Heart left ventricle (tissue), 16 donors: ENCODE measurements at regions of chr1 and their contacts with region 1.

Region 1: DNA sequence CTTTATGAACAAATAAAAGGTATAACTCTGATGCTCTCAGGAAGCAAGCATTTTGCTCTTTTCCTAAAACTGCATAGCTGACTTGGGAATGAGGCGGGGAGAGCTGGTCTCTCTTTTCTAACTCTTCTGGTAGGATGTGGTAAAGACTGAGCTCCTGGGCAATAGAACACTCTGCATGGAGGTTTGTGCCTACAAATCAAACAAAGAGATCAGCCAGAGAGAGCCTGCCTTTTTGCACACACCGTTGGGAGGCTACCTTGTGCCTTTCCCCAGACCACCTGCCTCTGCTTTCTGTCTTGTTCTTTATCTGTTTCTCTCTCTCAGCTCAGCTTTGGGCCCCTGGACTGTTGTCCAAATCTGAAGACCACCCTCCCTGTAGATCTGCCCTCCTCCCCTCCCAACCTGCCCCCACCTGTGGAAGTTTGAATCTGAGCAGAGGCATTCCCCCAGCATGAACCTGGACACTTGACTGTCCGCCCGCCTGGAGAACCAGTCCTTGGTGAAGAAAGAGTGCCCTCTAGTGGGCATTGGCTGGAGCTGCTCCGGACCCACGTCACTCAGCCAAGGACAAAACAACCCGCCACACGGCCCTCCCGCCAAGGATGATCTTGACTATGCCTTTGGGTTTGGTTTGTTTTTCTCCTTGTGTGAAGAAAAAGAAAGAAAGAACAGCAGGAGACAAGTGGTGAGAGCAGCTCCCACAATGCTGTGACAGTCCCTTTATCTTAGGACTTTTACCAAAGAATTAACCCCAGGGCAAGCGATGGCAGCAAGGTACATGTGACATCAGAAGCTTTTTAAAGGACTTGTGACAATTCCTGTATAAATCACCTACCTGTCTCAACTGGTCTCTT is 228.2 kb downstream of the PBX1 start:
- DNase-seq: peak; percentile 79 to 88 (median 82)
- ATAC-seq: peak; percentile 76 to 89 (median 88)
- H3K4me3 ChIP-seq: no peak overlapping the region
- H3K27ac ChIP-seq: peak overlapping the region in 7 of 12 donors; percentile 22 to 80 (median 63)
- H3K4me1 ChIP-seq: peaks cover 0 to 75% (median 33%) of the 10 kb centered on the region in 12 donors
- H3K27me3 ChIP-seq: no peaks in the 10 kb centered on the region
- CTCF ChIP-seq: peak; percentile 85 to 93 (median 90)
- POLR2A ChIP-seq: no peak

Region 2: DNA sequence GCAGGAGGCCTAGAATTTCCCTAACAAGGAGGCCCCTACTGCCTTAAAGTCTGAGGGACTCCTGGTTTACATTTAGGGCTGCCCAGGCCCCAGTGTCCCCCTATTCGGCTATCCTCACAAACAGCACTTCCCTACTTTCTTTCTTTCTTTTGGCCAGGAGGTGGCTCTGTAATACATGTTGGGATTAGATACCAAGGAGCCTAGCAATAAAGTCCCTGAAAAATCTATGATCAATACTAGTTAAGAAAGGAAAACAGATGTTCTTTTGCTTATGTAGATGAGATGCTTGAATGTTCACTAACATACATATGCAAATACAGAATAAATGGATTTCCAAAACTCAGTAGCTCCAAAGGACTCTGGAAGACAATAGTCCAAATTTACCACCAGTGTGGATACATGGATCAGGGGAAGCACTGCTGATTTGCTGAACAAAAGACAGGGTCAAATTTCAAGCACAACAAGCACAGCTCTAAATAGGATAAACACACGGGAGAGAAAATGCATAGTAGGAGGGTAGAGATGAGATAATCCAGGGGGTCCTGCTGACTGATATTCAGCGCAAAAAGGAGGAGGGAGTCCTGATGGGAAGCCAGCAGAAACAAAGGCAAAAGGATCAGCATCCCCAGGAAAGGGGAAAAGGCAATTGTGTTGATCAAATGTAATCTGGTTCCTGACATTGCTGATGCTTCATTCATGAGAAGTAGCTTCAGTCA is 1225.5 kb before region 1 on chr1:
- intact Hi-C with region 1: loop called in 1 of 10 experiments (anchors 10 kb)
- DNase-seq: no peak
- ATAC-seq: peak in 2 of 4 donors; percentile 47 to 63
- H3K4me3 ChIP-seq: no peak overlapping the region
- H3K27ac ChIP-seq: no peak overlapping the region
- H3K4me1 ChIP-seq: no peaks in the 10 kb centered on the region
- H3K27me3 ChIP-seq: no peaks in the 10 kb centered on the region
- CTCF ChIP-seq: peak in 11 of 12 donors; percentile 23 to 64 (median 46)
- POLR2A ChIP-seq: no peak

Region 3: DNA sequence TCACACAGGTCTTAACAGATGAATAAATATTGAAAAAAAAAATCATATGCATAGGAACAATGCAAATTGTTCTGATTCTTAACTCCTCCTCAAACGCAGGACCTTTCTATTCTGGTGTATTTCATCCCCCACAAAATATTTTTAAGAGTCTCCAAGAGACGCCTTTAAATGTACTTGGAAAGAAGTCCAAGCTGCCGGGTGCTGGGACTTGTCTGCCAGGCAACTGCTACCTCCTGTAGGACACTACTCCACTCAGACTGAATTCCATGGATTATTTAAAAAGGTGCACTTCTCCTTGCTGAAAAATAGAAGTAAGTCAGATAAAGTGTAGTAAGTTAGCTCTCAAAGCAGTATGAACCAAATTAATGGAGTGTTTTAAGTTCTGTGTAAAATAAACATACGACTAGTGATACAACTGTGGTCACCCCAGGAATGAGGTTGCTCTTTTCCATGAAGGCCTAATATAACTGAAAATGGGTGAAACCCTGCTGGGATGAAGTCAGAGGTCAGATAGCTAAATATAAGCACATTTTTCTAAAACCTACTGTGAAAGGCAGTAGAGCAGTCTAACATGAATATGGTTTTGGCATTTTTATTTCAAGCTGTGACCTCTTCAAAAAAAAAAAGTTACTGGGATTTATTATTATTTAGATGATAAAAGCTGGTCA is 417.4 kb before region 1 on chr1:
- intact Hi-C with region 1: loop called in 1 of 10 experiments (anchors 10 kb)
- DNase-seq: peak in 3 of 5 donors; percentile 17 to 28 (median 18)
- ATAC-seq: peak in 3 of 4 donors; percentile 53 to 77 (median 64)
- H3K4me3 ChIP-seq: no peak overlapping the region
- H3K27ac ChIP-seq: peak overlapping the region in 1 of 12 donors; percentile 1
- H3K4me1 ChIP-seq: peaks cover 0 to 6% (median 0%) of the 10 kb centered on the region in 12 donors
- H3K27me3 ChIP-seq: no peaks in the 10 kb centered on the region
- CTCF ChIP-seq: no peak
- POLR2A ChIP-seq: no peak

Region 4: DNA sequence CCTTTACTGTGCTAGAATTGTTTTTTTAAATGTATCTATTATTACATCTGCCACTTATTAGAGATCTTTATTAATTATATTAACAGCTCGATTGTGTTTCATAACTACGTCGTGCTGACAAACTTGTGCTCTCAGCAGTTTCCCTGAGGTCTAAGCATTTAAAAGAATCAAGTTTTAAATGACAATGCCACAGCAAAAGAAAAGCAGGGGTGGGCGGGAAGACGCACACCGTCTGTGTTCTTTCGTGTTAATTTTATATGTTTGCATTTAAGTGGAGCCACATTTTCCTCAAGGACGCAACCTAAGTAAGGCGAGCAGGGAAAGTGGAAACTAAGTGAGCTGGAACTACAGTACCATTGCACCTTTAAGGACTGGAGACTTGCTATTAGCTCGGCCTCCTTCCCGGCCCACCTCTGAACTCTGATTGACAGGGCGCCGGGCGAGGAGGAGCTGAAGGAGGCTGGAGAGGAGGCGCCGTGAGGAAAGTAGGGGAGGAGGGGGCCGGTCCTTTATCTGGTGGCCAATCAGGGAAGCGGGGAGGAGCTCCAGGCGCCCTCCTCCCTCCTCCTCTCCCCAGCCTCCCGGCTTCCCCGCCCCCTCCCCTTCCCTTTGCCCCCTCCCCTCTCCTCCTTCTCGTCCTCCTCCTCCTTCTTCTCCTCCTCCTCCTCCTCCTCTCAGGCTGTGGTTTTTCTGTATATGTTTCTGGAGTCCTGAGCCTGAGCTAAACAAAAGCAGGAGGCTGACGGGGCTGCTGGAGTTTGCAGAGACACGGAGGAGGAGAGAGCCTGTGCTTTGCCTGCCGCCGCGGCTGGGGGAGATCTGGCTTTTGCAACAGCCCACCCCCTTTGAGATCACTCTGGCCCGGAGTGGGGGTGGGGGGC is 228.5 kb before region 1 on chr1 and contains the start of gene PBX1:
- intact Hi-C with region 1: loop called in 8 of 10 experiments (anchors 2 to 10 kb)
- DNase-seq: peak; percentile 97 to 99 (median 98)
- ATAC-seq: peak; percentile 98 to 100 (median 99)
- H3K4me3 ChIP-seq: peak within 1 kb of the TSS; percentile 58 to 88 (median 73)
- H3K27ac ChIP-seq: peak within 1 kb of the TSS; percentile 58 to 87 (median 84)
- H3K4me1 ChIP-seq: peaks cover 0 to 13% (median 5%) of the 10 kb centered on the region in 12 donors
- H3K27me3 ChIP-seq: peaks cover 0 to 6% (median 0%) of the 10 kb centered on the region in 9 donors
- CTCF ChIP-seq: no peak
- POLR2A ChIP-seq: peak in 1 of 2 donors; percentile 91
- total RNA-seq, gene PBX1: 24.0 to 78.2 (median 59.8) TPM

Region 5: DNA sequence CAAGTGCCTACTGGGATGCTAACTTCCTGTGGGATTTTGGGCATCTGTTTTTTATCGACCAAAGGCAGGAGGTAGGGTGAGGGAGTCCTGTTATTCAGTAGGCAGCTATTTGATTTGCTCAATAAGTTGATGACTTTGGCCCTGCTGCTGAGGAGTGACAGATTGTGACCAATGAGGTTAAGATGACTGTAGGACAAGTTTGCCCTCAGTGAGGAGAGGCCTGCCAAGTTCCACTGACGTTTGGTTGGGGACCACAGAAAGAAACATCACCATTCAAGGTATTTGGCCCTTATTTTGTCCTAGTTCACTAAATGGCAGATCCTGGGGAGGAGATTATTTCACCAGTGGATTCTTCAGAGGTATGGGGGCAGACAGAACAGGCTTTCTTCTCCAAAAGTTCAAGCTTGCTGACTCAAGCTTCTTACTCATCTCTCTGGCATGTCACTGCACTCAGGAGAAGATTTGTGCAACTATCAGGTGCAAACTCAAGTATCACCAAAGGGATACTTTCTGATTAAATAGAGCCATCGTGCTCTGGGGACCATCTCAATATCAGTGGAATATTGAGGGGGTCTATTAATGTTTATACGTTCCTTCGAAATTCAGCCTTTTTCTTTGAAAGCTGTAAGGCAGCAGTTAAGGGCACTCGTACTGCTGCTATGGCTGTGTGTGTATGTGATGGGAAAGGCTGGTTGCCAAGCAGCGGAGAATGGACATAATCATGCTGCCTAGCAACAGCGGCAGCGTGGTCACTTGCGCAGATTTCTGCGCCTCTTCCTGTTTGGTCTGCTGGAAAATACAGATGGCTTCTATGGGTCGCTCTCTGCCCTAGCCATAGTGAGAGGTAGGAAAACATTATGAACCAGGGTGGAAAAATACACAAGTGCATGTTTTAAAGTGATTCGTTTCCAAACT is 149.5 kb before region 1 on chr1:
- intact Hi-C with region 1: loop called in 1 of 10 experiments (anchors 10 kb)
- DNase-seq: peak; percentile 56 to 81 (median 63)
- ATAC-seq: peak; percentile 63 to 81 (median 78)
- H3K4me3 ChIP-seq: no peak overlapping the region
- H3K27ac ChIP-seq: peak overlapping the region; percentile 56 to 91 (median 81)
- H3K4me1 ChIP-seq: peaks cover 0 to 89% (median 66%) of the 10 kb centered on the region in 12 donors
- H3K27me3 ChIP-seq: no peaks in the 10 kb centered on the region
- CTCF ChIP-seq: no peak
- POLR2A ChIP-seq: no peak

Region 6: DNA sequence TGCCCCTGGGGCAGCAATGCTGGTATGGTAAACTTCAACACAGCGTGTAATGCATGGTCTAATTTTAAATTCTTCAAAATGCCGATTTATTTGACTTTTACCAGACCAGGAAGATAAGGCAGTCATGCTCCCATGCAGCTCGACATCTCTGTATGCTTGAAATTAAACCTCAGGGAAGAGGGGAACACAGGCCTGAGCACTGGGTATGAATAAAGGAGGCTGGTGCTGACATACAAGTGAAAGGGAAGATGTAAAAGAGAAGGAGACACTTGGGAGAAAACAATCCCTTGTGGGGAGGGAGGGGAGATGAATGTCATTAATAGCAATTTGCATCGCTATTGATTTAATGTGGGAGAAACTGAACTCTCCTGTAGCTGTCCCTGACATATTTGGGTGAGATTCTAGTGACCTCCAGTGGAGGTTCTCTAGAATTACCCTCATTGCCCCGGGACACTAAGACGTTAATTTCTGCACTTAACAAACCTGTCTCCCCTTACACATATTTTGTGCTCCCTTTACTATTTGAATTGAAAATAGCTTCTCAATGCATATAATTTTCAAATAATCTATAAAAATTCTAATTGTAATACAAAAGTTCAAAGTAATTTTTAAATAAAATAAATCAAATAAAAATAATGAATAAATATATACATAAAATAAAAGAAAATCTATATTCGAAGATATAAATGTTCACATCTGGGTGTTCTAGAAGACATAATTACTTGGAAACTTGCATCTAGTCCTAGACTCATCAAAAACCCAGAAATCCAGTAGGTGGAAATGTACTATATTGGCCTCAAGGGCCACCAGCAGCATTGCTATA is 286.2 kb after region 1 on chr1:
- intact Hi-C with region 1: loop called in 5 of 10 experiments (anchors 5 to 10 kb)
- DNase-seq: no peak
- ATAC-seq: peak in 3 of 4 donors; percentile 63 to 75 (median 70)
- H3K4me3 ChIP-seq: no peak overlapping the region
- H3K27ac ChIP-seq: peak overlapping the region in 1 of 12 donors; percentile 13
- H3K4me1 ChIP-seq: peaks cover 0 to 10% (median 0%) of the 10 kb centered on the region in 12 donors
- H3K27me3 ChIP-seq: no peaks in the 10 kb centered on the region
- CTCF ChIP-seq: peak; percentile 61 to 88 (median 80)
- POLR2A ChIP-seq: no peak